Activated naive CD4-positive, alpha-beta T cell treated with anti-CD3 and anti-CD28 coated beads, Interleukin-2, amount 10 ng/mL, durations not matched to agents 7 days and 5 days (primary cell): ENCODE measurements at regions of chr2 and their contacts with region 1.

Region 1: DNA sequence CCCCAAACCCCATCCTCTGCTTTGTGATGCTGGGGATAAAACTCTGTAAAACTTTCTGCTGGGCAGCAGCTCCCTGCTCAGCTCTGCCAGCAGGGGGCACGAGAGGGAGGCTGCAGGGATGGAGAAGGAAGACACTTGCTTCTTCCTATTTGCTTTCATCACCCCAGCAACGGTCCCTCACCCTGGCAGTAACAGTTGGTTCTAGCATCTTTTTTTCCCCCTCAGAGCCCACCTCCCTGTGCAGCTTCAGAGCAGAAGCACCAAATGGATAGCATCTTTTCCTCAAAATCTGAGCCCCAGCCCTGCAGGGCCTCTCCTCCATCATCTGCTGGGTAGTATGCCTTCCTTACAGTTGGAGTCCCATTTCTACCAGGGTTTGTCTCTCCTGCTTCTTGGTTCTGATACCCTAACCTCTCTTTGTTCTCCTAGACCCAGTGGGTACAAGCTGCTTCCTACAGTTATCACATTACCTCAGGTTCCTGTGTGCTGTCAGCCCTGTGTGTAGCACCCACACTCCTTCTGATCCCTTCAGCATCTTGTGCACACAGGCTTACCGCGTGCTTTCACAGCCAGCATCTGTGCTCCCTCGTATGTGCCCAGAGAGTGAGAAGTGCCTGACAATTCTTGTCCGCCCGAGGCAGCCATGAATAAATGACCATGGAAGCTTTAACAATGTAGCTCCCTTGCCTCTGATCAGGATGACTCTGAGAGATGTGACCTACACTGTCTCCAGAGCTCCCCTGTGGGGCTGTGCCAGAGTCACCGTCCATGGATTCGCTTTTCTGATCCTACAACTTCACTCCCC is 14.5 kb downstream of the CKAP2L start:
- DNase-seq: peak; percentile 90
- H3K4me3 Mint-ChIP-seq: no peak overlapping the region
- H3K27ac Mint-ChIP-seq: peak overlapping the region; percentile 43
- H3K4me1 Mint-ChIP-seq: peaks cover 52% of the 10 kb centered on the region
- H3K27me3 Mint-ChIP-seq: no peaks in the 10 kb centered on the region

Region 2: DNA sequence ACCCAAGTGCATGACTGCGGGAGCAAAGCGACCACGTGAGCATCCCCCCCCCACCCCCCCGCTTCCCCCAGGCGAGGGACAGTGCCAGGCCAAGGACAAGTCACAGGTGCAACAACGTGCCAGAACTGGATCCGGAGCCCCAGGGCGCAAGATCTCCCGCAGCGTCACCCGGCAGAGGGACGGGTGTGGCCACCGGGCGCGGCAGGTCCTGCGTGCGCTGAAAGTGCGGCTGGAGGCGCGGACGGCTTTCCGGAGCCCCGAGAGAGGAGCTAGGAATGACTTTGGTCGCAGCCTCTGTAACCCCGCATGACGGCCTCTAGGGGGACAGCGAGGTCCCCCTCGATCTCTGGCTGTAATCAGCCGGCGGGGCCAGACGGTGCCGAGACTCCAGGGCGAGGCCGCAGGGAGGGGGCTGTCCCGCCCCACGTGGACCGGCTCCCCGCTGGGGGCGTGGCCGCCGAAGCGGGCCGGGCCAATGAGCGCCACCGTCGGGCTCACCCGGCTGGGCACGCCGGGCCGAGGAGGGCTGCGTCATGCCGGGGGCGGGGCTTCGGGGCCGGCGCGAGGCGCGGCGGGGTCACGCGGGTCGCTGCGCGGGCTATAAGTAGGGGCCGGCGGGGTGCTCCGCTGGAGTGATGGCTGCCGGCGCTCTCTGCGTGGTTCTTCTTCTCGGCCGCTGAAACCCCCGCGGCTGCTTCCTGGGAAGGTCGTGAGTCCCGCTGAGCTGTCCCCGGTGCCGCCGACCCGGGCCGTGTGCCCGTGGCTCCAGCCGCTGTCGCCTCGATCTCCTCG is 104.5 kb before region 1 on chr2 and contains the start of gene SLC20A1:
- CTCF ChIA-PET with region 1: no interaction called
- DNase-seq: peak; percentile 98
- H3K4me3 Mint-ChIP-seq: peak within 1 kb of the TSS; percentile 99
- H3K27ac Mint-ChIP-seq: peak within 1 kb of the TSS; percentile 93
- H3K4me1 Mint-ChIP-seq: peaks cover 69% of the 10 kb centered on the region
- H3K27me3 Mint-ChIP-seq: no peaks in the 10 kb centered on the region

Region 3: GRCh38 chr2:112762276-112762675 is 12.3 kb after region 1 on chr2:
- CTCF ChIA-PET with region 1: interaction called, 14 read pairs
- DNase-seq: no peak
- H3K4me3 Mint-ChIP-seq: peak overlapping the region; percentile 98
- H3K27ac Mint-ChIP-seq: no peak overlapping the region
- H3K4me1 Mint-ChIP-seq: peaks cover 50% of the 10 kb centered on the region
- H3K27me3 Mint-ChIP-seq: no peaks in the 10 kb centered on the region

Region 4: DNA sequence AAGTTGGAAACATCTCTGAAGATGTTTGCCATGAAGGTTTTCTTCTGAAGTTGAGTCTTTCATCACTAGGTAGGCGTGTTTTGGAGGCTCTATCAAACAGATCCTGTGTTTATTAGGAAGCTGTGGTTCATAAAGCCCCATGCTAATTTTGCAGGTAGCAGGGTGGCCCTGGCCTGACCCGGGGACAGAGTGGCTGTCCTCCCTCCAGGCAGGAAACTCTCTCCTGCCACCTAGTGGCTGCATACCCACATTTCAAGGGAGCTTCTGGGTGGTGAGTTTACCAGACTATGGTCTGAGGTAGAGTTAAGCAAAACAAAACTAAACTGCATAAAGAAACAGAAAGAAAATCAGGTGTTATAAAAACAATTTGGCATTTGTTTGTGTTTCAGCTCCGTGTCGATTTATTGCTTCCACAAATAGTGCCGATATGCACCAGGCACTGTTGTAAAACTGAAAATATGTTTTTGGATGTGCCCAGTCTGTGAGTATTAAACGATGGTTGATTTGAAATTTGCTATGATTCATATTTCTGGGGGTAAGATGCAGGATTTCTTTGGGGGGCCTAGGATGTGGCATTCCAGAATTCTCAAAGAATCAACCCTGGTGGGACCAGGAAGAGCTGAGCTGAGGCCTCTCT is 135.0 kb after region 1 on chr2:
- CTCF ChIA-PET with region 1: interaction called, 86 read pairs
- DNase-seq: peak; percentile 78
- H3K4me3 Mint-ChIP-seq: no peak overlapping the region
- H3K27ac Mint-ChIP-seq: peak overlapping the region; percentile 43
- H3K4me1 Mint-ChIP-seq: peaks cover 27% of the 10 kb centered on the region
- H3K27me3 Mint-ChIP-seq: peaks cover 10% of the 10 kb centered on the region

Region 5: DNA sequence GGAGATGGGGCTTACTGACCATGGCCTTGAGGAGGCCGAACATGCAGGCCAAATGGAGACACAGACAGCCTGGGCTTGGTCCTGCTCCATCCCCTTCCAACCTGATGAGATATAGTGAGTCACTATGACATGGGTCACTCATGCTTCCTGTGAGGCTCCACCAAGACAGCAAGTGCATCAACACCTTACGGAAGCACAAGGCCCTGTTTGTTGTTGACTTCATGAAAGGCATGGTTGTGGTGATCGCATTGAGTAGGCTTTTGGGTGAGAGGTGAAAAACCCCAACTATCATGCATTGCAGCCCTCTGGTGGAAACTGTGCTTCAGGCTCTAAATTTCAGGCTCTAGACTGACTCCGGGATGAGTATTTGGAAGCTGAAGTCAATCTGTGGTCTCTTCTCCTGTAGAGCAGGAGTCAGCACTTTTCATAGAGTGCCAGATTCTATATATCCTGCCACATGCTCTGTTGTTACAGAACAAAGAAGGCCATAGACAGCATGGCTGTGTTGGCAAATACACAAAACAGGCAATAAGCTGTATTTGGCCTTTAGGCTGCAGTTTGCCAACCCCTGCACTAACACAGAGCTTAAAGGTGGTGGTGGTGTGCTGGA is 171.1 kb after region 1 on chr2:
- CTCF ChIA-PET with region 1: interaction called, 11 read pairs
- DNase-seq: no peak
- H3K4me3 Mint-ChIP-seq: no peak overlapping the region
- H3K27ac Mint-ChIP-seq: no peak overlapping the region
- H3K4me1 Mint-ChIP-seq: no peaks in the 10 kb centered on the region
- H3K27me3 Mint-ChIP-seq: peaks cover 14% of the 10 kb centered on the region

Region 6: GRCh38 chr2:113211226-113212105 is 461.5 kb after region 1 on chr2:
- CTCF ChIA-PET with region 1: no interaction called
- DNase-seq: no peak
- H3K4me3 Mint-ChIP-seq: no peak overlapping the region
- H3K27ac Mint-ChIP-seq: no peak overlapping the region
- H3K4me1 Mint-ChIP-seq: peaks cover 7% of the 10 kb centered on the region
- H3K27me3 Mint-ChIP-seq: peaks cover 26% of the 10 kb centered on the region